AG04450 (cell line): ENCODE measurements at regions of chr2 and their contacts with region 1.

Region 1: DNA sequence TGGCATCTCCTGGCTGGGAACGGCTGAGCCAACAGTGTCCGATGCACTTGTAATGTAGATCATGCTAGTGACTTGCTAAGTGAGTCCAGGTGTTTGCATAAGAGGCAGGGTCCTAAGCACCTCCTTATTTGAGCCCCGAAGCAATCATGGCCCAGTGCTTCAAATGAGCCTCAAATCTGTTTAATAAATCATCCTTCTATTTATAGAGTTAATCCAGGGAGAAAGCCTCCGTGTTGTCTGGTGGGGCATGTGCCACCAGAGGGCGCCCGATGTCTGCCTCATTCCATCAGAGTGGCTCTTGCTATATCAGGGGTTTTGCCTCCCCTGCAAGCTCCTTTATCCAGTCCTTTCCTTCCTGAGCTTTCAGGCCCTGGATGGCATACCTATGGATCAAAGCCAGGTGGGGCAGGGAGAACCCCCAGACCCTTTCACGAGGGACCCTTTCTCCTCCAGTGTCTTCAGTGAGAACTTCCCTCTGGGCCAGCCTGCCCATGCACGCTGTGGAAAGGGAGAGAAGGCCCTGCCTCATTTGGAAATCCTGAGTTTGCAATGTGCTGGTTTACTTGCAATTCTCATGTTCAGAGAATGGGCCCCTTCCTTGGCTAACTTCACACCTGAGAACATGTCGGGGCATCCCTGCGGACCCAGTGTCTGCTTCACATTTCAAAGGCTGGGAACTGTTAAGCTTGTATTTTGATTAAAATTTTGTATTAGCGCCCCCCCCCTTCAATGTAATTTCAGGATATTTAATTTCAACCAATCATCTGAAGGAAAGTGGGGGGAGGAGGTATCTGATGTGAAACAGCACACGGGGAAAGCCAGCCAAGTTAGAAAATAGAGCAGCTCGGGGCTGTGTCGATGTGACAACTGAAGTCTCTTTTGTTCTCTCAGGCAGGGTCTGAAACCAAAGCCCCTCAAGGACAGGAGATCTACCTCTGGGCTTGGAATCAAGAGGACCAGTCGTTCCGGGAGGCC is 39.7 kb downstream of the RDH14 start:
- DNase-seq: peak; percentile 68
- H3K4me3 ChIP-seq: no peak overlapping the region
- H3K27ac ChIP-seq: no peak overlapping the region
- H3K27me3 ChIP-seq: no peaks in the 10 kb centered on the region
- CTCF ChIP-seq: peak; percentile 96

Region 2: DNA sequence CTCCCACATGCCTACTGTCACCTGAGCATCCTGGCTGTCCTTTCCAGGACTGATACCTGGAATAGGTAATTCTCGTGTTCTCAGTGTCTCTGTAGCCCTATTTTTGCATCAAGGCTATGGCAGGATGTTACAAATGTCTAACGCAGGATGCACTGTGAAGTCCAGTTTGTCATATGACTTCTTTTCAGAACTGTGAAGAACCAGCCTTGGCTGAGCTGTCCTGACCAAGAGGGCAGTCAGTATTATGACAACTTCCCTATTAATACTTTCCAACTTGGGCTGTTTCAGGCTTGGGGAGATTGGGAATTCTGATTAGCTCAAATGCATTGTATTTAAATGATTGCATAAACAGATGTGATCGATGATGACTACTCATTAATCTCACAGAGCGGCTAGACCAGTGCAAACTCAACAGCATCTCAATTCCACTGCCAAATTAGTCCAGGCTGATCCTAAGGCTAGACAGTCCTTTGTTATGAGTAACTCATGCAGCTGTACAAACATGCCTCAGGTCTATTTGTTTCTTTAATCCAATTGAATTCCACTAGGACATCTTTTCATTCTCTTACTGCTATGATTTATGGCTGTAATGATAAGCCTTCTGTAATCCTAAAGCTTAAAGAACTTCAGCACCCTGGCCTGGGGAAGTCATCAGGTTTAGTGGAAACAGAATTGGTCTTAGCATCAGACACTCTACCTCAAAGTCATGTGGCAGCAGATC is 310.7 kb before region 1 on chr2:
- CTCF ChIA-PET with region 1: no interaction called
- POLR2A ChIA-PET with region 1: no interaction called
- DNase-seq: peak; percentile 55
- H3K4me3 ChIP-seq: no peak overlapping the region
- H3K27ac ChIP-seq: peak overlapping the region; percentile 21
- H3K27me3 ChIP-seq: no peaks in the 10 kb centered on the region
- CTCF ChIP-seq: no peak

Region 3: DNA sequence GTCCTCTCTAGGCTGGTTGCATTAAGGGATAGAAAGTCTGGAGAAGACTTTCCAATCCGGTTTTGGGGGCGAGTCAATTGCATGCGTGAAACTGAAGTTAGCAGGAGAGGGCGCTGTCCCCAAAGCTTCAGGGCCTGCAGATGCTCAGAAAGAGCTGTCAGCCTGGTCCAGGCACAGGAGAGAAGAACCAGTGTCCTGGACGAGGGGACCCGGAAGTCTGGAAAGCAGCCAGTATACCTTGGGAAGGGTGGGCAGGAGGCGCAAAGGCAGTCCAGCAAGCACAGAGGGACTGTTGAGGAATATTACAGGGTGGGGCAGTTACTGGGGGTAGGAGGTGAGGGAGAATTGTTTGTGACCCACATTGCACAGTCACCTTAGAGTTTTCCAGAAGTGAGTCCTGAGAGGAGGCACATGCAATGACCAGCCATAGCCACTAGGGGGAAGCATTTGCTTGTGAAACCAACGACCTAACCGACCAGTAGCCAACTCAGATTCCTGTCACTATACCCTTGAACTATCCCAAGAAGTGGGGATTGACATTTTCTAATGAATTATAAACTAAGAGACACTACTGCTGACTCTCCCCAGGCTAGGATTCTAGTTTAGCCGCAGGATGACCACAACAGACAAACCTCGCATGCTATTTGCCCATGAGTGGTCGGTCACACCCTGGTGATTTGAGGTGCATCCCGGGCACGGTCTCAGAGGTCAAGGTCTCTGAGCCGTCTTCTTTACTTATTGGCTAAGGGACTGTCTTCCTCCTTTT is 133.1 kb before region 1 on chr2:
- CTCF ChIA-PET with region 1: interaction called, 24 read pairs
- POLR2A ChIA-PET with region 1: interaction called, 3 read pairs
- DNase-seq: peak; percentile 48
- H3K4me3 ChIP-seq: no peak overlapping the region
- H3K27ac ChIP-seq: no peak overlapping the region
- H3K27me3 ChIP-seq: no peaks in the 10 kb centered on the region
- CTCF ChIP-seq: peak; percentile 96

Region 4: DNA sequence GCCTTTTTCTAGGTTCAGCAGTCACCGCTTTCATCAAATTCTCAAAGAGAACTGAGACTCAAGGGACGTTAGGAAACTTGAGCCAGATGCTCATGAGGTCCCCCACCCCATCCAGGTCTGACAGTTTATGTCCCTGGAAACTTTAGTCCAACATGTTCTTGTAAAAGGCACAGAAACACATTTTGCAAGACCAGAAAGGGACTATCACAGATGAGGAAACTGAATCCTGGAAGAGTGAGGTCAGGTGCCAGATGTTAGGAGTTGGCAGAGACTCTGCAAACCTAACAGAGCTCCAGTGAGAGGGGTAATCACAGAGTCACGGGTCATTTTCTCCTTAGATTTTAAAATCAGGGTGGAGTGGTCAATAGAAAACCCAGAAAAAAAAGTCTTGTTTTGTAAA is 36.8 kb before region 1 on chr2:
- CTCF ChIA-PET with region 1: no interaction called
- POLR2A ChIA-PET with region 1: no interaction called
- DNase-seq: no peak
- H3K4me3 ChIP-seq: no peak overlapping the region
- H3K27ac ChIP-seq: no peak overlapping the region
- H3K27me3 ChIP-seq: no peaks in the 10 kb centered on the region
- CTCF ChIP-seq: no peak

Region 5: GRCh38 chr2:18552351-18553077 is 31.8 kb after region 1 on chr2:
- CTCF ChIA-PET with region 1: interaction called, 21 read pairs
- POLR2A ChIA-PET with region 1: no interaction called
- DNase-seq: no peak
- H3K4me3 ChIP-seq: no peak overlapping the region
- H3K27ac ChIP-seq: no peak overlapping the region
- H3K27me3 ChIP-seq: no peaks in the 10 kb centered on the region
- CTCF ChIP-seq: no peak

Region 6: DNA sequence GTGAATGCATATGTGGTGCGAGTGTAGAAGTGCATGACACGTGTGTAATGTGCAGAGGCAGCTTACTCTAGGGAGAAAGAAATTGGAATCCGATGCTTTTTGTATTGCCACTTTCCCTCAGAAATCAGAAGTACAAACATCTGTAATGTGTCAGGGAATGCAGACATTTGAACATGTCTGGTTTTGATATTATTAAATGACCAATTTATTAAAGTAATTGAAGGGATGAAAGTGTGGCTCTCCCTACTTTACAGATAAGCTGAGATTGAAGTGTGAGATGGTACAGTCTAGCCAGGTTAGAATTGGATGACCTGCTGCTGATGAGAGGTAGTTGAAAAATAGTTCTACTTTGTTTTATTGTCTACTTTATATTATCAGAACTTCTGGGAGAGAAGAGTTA is 143.1 kb after region 1 on chr2:
- CTCF ChIA-PET with region 1: no interaction called
- POLR2A ChIA-PET with region 1: interaction called, 12 read pairs
- DNase-seq: no peak
- H3K4me3 ChIP-seq: no peak overlapping the region
- H3K27ac ChIP-seq: no peak overlapping the region
- H3K27me3 ChIP-seq: no peaks in the 10 kb centered on the region
- CTCF ChIP-seq: no peak

Region 7: DNA sequence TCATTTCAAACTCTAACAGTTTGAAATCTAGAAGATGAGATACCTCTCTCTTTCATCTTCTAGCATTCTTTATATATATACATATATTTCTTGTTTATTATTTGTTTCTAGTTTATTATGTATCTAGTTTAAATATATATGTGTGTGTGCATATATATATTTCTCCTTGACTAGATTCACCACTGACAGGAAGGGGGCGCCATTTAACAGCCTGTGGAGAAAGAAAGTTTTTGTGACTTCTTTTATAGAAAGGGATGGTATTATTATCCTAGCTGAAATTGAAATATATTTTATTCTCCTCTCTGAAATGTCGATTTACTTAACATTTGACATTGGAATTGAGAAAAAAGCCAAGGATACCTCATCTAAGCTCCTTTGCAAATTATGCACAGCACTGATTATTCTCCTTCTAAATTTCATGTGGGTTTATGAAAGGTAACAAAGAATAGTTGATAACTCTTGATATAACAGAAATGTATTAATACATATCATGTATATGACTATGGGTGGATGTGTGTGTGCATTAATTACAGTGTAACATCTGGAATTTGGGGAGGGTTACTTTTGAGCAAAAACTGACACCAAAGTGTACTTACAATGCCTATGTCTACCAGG is 229.3 kb after region 1 on chr2:
- CTCF ChIA-PET with region 1: interaction called, 85 read pairs
- POLR2A ChIA-PET with region 1: interaction called, 3 read pairs
- DNase-seq: no peak
- H3K4me3 ChIP-seq: no peak overlapping the region
- H3K27ac ChIP-seq: no peak overlapping the region
- H3K27me3 ChIP-seq: no peaks in the 10 kb centered on the region
- CTCF ChIP-seq: peak; percentile 84

Region 8: DNA sequence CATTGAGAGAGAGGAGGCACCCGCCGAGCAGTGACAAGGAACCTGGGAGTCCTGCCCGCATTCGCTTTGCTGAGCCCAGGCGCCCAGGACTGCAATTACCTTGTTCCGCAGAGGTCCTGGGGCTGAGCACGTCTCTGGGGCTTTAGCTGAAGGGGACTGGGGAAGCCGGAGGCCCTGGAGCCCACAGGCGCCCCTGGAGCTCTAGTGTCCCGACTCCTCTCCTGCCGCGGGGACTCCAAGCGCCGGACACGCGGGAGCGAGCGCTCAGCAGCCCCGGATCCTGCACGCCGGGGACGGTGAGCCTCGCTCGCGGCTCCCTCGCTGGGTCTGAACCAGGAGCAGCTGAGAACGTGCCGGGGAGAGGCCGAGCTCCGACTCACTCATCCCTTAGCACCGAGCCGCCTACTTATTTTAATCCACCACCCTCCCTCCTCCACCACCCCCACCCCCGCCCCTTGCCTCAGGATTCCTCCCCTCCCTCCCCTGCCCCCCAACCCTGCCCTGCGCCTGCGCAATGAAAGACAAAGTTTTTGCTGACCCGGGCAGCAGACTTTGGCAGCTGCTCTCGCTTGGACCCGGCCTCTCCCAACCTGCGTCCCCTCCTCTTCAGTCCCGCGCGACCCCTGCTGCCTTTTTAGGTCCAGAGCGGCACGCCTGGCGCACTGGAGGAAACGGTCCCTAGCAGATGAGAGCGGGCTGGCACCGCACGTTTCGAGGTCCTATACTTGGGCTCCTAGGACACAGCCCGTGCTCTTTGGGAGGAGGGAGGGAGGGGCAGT is 837.7 kb after region 1 on chr2 and contains the start of gene OSR1:
- CTCF ChIA-PET with region 1: interaction called, 14 read pairs
- POLR2A ChIA-PET with region 1: interaction called, 5 read pairs
- DNase-seq: peak; percentile 76
- H3K4me3 ChIP-seq: peak within 1 kb of the TSS; percentile 93
- H3K27ac ChIP-seq: peak within 1 kb of the TSS; percentile 77
- H3K27me3 ChIP-seq: no peaks in the 10 kb centered on the region
- CTCF ChIP-seq: no peak
- polyA plus RNA-seq, gene OSR1: 13.5 and 14.0 TPM in 2 replicates